ENCODE measurements at regions of chr7 and their contacts with region 1.

Region 1: DNA sequence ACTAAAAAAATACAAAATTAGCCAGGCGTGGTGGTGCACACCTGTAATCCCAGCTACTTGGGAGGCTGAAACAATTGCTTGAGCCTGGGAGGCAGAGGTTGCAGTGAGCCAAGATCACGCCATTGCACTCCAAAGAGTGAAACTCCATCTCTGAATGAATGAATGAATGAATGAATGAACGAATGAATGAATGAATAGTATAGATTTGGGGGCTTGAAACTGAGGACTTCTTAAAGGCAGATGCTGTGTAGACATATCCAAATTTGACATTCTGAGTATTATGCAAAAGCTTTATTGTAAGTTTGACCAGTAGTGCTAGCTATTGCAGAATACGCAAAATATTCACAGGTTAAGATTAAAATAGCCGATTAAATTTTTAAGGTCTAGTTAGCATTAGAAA is 30.8 kb upstream of the ST7 start:
- DNase-seq: no peak
- H3K4me3 ChIP-seq: no peak overlapping the region
- H3K27ac ChIP-seq: no peak overlapping the region
- H3K4me1 ChIP-seq: no peaks in the 10 kb centered on the region
- H3K27me3 ChIP-seq: no peaks in the 10 kb centered on the region
- CTCF ChIP-seq: no peak
- POLR2A ChIP-seq: no peak

Region 2: DNA sequence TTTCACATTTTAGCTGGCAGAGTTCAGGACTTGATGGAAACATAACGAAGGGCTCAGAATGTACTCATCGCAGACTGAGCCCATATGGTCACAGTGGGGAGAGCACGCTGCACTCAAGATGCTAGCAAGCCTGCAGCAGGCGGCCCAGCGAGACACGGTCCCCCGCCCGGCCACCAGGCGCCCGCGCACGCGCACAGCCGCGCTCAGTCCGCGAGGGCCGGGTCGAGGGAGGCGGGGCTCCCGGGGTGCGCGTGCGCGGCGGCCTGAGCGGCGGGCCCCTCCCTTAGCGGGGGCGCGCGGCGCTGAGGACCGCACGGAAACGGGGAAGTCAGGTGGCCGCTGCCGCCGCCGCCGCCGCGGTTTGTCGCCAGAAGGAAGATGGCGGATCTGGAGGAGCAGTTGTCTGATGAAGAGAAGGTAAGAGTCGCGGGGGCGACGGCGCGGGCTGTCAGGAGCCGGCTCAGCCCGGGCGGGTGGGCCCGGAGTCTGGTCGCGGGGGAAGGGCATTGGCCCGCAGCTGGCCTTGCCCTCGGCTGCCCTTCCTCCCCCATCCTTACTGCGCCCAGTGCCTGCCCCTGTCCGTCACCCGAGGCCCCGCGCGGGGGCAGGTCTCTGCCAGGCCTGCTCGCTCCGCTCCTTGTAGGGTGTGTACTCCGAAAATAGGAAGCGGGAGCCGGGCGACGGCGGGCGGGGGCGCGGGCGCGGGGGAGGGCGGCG is 60.2 kb before region 1 on chr7 and contains the start of gene CAPZA2:
- CTCF ChIA-PET with region 1: no interaction called
- POLR2A ChIA-PET with region 1: no interaction called
- dilution Hi-C with region 1: no loop called
- intact Hi-C with region 1: loop called (anchors 2 kb)
- DNase-seq: peak; percentile 93
- H3K4me3 ChIP-seq: peak within 1 kb of the TSS; percentile 55 to 95 (median 92)
- H3K27ac ChIP-seq: peak within 1 kb of the TSS; percentile 65
- H3K4me1 ChIP-seq: peaks cover 19% of the 10 kb centered on the region
- H3K27me3 ChIP-seq: no peaks in the 10 kb centered on the region
- CTCF ChIP-seq: peak in 1 of 2 donors; percentile 34
- POLR2A ChIP-seq: peak; percentile 80
- total RNA-seq, gene CAPZA2: 343 and 347 TPM in 2 replicates

Region 3: GRCh38 chr7:117023325-117023854 is 100.8 kb after region 1 on chr7:
- CTCF ChIA-PET with region 1: no interaction called
- POLR2A ChIA-PET with region 1: no interaction called
- dilution Hi-C with region 1: no loop called
- intact Hi-C with region 1: no loop called
- DNase-seq: no peak
- H3K4me3 ChIP-seq: no peak overlapping the region
- H3K27ac ChIP-seq: no peak overlapping the region
- H3K4me1 ChIP-seq: peaks cover 36% of the 10 kb centered on the region
- H3K27me3 ChIP-seq: no peaks in the 10 kb centered on the region
- CTCF ChIP-seq: no peak
- POLR2A ChIP-seq: no peak

Region 4: DNA sequence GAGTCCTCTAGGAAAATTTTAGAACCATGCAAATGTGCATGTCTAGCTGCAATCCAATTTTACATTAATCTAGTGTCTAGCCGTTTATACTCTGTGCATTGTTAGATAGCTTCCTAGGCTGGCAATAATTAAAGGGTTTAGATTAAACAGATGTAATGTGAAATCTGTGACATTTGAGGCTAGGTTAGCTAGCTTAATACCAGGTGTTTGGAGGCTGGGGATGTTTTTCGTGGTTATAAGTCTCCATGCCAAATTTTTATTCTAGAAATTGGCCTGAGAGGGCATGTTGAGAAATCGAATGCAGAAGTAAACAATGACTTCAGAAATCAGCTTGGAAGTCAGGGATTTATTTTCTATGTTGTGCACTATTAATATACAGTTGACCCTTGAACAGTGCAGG is 125.0 kb after region 1 on chr7:
- CTCF ChIA-PET with region 1: no interaction called
- POLR2A ChIA-PET with region 1: no interaction called
- dilution Hi-C with region 1: no loop called
- intact Hi-C with region 1: no loop called
- DNase-seq: no peak
- H3K4me3 ChIP-seq: no peak overlapping the region
- H3K27ac ChIP-seq: no peak overlapping the region
- H3K4me1 ChIP-seq: no peaks in the 10 kb centered on the region
- H3K27me3 ChIP-seq: no peaks in the 10 kb centered on the region
- CTCF ChIP-seq: no peak
- POLR2A ChIP-seq: no peak

Measured in endothelial cell of umbilical vein (primary cell).